Activated CD8-positive, alpha-beta memory T cell treated with anti-CD3 and anti-CD28 coated beads, Interleukin-2, amount 10 ng/mL, durations not matched to agents 7 days and 5 days (primary cell): ENCODE measurements at regions of chr14 and their contacts with region 1.

Region 1: GRCh38 chr14:62126879-62127478 is 364.8 kb downstream of the SNAPC1 start:
- DNase-seq: no peak
- ATAC-seq: no peak
- H3K4me3 Mint-ChIP-seq: no peak overlapping the region
- H3K27ac Mint-ChIP-seq: no peak overlapping the region
- H3K4me1 Mint-ChIP-seq: no peaks in the 10 kb centered on the region
- H3K27me3 Mint-ChIP-seq: peaks cover 71% of the 10 kb centered on the region

Region 2: DNA sequence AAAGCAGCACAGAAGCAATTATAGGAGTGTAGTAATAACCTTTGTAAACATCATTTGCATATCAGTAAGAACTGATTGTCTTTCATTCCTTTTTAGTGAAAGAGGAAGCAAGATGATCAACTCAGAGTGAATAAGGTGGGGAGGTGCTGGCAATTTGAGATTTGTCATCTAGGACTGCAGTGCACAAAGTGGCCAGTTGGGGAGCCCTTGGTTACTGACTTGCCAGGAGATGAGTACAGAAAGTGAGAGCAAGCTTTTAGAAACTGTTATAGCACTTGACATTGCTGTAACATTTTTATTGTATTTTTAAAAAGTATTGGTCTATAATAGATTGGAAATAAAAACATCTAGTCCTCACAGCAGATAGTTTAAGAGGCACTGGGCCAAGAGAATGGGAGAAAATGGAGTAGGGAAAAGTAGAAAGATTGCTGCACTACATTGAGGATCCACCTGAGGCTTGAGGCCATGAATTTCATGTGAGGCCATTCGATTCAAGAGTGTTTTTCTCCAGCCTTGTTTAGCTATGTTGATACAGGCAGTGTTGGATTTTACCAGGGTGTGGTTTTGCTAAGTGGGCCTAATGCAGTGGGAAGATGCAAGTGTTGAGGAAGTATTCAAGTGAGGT is 266.6 kb before region 1 on chr14:
- CTCF ChIA-PET with region 1: interaction called, 13 read pairs
- DNase-seq: peak; percentile 76
- ATAC-seq: peak; percentile 90
- H3K4me3 Mint-ChIP-seq: no peak overlapping the region
- H3K27ac Mint-ChIP-seq: no peak overlapping the region
- H3K4me1 Mint-ChIP-seq: no peaks in the 10 kb centered on the region
- H3K27me3 Mint-ChIP-seq: peaks cover 27% of the 10 kb centered on the region

Region 3: DNA sequence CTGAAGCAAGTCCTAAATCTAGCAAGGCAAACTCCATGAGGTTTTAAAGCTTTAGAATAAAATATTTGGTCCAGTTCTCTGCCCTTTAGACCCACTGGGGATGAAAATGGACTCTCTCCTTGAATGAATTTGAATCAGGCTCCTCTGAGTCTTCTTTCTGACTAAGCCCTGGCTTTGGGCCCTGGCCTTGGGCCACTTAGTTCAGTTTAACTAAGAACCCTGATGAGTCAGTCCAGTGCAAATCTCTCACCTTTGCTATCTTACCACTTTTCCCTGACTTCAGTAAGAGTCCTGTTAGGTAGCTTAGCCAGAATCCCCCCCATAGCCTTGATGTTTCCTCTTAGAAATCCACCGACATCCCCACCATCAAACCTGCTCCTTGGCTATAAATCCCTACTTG is 62.7 kb after region 1 on chr14:
- CTCF ChIA-PET with region 1: no interaction called
- DNase-seq: no peak
- ATAC-seq: no peak
- H3K4me3 Mint-ChIP-seq: no peak overlapping the region
- H3K27ac Mint-ChIP-seq: no peak overlapping the region
- H3K4me1 Mint-ChIP-seq: no peaks in the 10 kb centered on the region
- H3K27me3 Mint-ChIP-seq: peaks cover 13% of the 10 kb centered on the region

Region 4: DNA sequence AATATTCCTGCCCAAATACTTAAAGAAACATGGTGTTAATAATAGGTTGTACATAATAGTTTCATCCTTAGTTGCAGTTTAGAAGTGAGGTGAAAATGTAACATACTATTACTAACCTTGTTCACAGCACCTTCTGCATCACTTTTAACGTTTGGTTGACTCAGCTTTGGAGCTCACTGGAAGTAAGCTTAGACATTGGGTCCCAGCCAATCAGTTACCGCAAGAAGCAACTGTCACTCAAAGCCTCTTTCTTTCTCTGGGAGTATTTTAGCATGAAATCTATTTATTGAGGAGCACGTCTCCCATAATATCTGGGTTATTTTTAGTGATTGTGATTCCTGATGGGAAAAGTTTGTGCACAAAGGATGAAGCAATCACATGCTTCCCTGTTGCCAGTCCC is 107.9 kb after region 1 on chr14:
- CTCF ChIA-PET with region 1: no interaction called
- DNase-seq: no peak
- ATAC-seq: no peak
- H3K4me3 Mint-ChIP-seq: no peak overlapping the region
- H3K27ac Mint-ChIP-seq: no peak overlapping the region
- H3K4me1 Mint-ChIP-seq: no peaks in the 10 kb centered on the region
- H3K27me3 Mint-ChIP-seq: no peaks in the 10 kb centered on the region